Dendritic cell treated with granulocyte-macrophage colony-stimulating factor and Interleukin-4, amounts not matched to agents 40 ng/mL and 50 ng/mL, for 4 days (primary cell): ENCODE measurements at regions of chr11 and their contacts with region 1.

Region 1: DNA sequence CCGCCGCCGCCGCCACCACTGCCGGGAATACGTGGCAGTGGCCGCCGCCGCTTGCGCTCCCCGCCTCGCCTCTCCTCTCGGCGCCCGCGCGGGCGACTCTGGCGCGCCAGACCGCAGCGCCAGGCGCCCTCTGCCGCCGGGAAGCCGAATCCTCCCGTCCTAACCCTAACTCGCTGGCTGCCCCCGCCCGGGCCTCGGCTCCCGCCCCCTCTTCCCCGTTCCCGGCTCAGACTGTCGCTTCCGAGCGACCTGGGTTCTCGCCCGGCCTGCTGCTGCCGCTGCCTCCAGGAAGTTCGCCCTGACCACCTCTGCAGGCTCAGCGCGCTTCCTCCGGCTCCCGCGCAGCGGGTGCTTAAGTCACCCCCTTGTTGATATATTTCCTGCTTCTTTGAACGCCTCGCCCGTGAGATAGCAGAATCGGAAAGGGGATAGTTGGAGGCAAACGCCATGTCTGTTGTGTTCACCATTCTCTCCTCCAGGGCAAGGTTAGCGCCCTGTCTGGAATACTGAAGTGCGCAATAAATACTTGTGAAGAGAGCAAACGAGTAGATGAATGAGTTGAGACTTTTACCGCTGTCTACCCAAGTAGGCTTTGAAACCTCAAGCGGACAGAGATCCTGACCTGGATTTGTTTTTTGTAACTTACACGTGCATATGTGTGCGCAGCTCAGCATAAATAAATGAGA is at the start of gene SMCO4:
- H3K4me3 Mint-ChIP-seq: peak within 1 kb of the TSS; percentile 92
- H3K27ac Mint-ChIP-seq: peak within 1 kb of the TSS; percentile 90
- H3K4me1 Mint-ChIP-seq: peaks cover 46% of the 10 kb centered on the region
- H3K27me3 Mint-ChIP-seq: no peaks in the 10 kb centered on the region

Region 2: DNA sequence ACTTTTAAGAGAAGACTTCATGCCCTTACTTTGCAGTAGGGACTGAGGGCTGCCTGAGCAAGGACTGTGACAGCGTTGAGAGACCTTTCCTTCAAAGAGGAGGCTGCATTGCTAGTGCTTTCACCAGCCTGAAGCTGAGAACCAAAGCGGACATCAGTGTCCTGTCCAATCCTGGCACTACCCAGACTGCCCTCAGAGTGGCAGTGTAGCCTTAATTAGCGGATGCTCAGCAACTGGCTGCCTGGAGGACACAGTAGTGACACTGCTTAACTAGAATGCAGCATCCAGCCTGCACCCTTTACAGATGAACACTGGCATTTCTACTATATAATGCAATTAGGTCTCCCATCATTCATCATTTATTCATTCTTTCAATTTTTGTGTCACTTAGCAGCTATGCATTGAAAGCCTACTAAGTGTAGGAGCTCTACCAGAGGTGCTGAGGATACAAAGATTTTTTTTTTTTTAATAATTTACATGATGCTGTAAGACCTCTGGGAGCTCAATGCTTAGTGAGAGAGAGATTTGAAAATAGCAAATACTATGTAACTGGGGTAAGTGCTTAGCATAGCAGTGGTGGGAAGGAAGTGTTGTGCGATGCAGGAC is 308.7 kb before region 1 on chr11:
- intact Hi-C with region 1: loop called (anchors 2 kb)
- H3K4me3 Mint-ChIP-seq: no peak overlapping the region
- H3K27ac Mint-ChIP-seq: no peak overlapping the region
- H3K4me1 Mint-ChIP-seq: no peaks in the 10 kb centered on the region
- H3K27me3 Mint-ChIP-seq: peaks cover 9% of the 10 kb centered on the region

Region 3: DNA sequence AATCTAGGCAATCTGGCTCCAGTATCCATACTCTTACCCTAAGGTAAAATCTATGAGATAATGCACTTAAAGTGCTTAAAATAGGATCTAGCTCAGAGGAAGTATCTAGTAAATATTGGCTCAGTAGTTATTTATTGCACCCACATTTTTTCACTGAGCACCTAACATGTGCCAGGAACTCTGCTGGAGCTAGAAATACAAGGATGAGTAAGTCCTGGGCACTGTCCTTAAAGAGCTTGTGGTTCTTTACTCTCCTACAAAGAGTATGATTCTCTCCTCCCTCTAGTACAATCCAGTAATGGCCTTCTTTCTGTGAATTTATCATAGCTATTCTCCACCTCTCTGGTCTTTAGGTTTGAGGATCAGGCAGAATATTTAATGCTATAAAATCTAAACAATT is 153.7 kb before region 1 on chr11:
- intact Hi-C with region 1: loop called (anchors 10 kb)
- H3K4me3 Mint-ChIP-seq: no peak overlapping the region
- H3K27ac Mint-ChIP-seq: no peak overlapping the region
- H3K4me1 Mint-ChIP-seq: no peaks in the 10 kb centered on the region
- H3K27me3 Mint-ChIP-seq: no peaks in the 10 kb centered on the region

Region 4: DNA sequence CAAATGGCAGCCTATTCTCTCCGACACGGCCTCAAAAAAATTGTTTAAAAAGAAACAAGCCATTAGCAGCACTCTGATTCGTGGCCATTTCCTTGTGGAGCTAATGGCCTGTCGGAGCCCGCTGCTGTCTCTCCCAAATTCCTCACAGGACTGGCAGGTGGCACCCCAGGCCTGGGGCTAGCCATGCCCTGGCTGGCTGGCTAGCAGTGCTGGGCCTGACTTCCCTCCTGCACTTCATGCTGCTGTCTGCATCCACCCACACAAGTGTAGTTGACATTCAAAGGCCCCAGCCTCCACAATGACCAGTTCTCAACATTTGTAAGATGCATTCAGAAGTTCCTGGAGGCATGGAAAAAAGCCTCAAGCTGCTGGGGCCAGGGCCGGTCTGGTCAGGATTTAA is 61.7 kb before region 1 on chr11:
- intact Hi-C with region 1: loop called (anchors 5 kb)
- H3K4me3 Mint-ChIP-seq: no peak overlapping the region
- H3K27ac Mint-ChIP-seq: peak overlapping the region; percentile 10
- H3K4me1 Mint-ChIP-seq: peaks cover 15% of the 10 kb centered on the region
- H3K27me3 Mint-ChIP-seq: no peaks in the 10 kb centered on the region

Region 5: DNA sequence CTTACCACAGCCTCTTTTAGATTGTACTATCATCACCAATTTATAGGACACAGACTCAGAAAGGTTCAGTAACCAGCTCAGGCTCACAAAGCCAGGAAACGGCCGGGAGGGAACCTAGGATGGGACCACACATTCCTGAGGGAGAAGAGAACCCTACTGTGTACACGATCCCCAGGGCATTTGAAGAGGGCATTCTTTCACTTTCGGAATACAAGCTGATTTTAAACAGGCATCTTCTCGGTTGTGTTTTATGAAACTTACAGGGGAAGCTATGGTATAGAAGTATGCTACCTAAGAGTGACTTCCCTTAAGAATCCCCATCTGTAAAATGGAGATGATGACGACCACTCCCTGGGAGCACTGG is 19.3 kb before region 1 on chr11:
- intact Hi-C with region 1: loop called (anchors 1 kb)
- H3K4me3 Mint-ChIP-seq: peak overlapping the region; percentile 65
- H3K27ac Mint-ChIP-seq: peak overlapping the region; percentile 91
- H3K4me1 Mint-ChIP-seq: peaks cover 72% of the 10 kb centered on the region
- H3K27me3 Mint-ChIP-seq: no peaks in the 10 kb centered on the region

Region 6: DNA sequence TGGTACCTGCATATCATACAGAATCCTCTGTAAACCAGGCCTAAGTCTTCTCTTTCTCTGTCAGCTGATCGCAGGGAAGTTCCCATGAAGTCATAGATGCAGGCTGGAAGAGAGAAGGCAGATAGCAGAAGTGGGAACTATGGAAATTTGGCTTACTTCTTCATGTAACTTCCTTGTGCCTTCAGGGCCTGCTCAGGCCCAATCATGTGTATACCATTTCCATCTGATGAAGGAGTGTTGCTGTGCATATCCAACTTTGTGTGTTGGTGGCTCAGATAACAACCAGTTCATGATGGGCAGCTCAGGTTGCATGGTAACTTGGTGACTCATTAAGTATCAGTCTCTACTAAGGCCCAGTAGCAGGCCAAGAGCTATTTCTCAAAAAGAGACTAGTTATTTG is 64.9 kb after region 1 on chr11:
- intact Hi-C with region 1: loop called (anchors 5 kb)
- H3K4me3 Mint-ChIP-seq: no peak overlapping the region
- H3K27ac Mint-ChIP-seq: peak overlapping the region; percentile 85
- H3K4me1 Mint-ChIP-seq: peaks cover 20% of the 10 kb centered on the region
- H3K27me3 Mint-ChIP-seq: no peaks in the 10 kb centered on the region

Region 7: GRCh38 chr11:93652161-93652597 is 108.7 kb after region 1 on chr11:
- intact Hi-C with region 1: loop called (anchors 5 kb)
- H3K4me3 Mint-ChIP-seq: no peak overlapping the region
- H3K27ac Mint-ChIP-seq: no peak overlapping the region
- H3K4me1 Mint-ChIP-seq: peaks cover 36% of the 10 kb centered on the region
- H3K27me3 Mint-ChIP-seq: peaks cover 4% of the 10 kb centered on the region

Region 8: DNA sequence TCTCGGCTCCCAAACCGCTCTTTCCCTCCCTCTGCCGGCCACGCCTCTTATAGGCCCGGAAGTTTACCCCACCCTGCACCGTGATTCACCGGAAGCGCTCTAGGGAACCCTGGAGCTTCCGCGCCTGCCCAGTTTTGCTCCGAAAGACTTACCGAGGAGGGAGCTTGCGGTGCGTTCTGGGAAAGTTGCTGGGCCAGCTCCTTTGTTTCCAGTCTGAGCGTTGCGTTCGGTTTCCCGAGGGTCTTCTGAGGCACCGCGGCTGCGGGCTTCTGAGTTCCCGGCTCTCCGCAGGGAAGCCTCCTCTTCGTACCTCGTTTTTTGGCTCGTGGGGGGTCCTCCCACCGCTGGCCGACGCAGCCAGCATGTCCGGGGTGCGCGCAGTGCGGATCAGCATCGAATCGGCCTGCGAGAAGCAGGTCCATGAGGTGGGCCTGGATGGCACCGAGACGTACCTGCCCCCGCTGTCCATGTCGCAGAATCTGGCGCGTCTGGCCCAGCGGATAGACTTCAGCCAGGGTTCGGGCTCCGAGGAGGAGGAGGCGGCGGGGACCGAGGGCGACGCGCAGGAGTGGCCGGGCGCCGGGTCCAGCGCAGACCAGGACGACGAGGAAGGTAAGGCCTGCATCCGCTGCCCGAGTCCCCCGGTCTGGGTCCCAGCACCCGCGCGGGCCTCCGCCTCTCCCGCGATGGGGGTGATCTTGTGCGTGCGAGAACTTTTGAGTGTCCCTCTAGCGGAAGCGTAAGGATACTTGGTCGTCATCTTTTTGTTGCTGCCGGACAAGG is 240.9 kb after region 1 on chr11 and contains the start of gene MED17:
- intact Hi-C with region 1: no loop called
- H3K4me3 Mint-ChIP-seq: peak within 1 kb of the TSS; percentile 88
- H3K27ac Mint-ChIP-seq: peak within 1 kb of the TSS; percentile 90
- H3K4me1 Mint-ChIP-seq: peaks cover 31% of the 10 kb centered on the region
- H3K27me3 Mint-ChIP-seq: no peaks in the 10 kb centered on the region

Region 9: DNA sequence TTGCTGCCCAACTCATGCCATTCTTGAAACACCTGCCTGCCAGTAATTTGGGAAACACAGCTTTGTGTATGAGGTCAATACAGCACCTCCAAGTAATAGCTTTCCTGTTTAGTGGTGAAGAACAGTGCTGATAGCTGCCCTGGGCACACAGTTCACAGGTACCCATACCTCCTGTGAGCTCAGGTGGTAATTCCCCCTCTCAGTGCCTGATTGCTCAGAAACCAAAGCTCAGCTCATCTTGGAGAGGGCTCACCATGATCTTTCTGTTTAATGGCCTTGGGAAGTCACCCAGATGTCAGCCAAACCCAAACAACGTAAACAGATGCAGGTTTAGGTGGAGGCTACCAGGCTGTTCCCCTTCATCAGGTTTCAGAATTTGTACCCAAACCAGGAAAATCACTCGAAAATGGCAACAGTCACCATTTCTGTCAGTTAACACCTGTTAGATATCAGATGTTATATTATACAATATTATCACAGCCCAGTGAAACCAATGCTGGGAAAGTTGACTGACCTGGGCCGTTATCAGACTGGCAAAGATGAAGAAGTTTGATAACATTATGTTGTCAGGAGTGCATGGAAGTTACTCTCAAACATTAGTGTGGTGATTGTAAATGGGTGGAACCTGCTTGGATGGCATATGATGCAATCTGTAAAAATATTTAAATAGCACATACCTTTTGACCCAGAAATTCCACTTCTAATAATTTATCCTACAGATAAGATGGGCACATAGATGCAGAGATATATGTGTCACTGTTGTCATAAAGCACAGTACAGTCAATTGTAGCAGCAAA is 288.1 kb after region 1 on chr11:
- intact Hi-C with region 1: no loop called
- H3K4me3 Mint-ChIP-seq: no peak overlapping the region
- H3K27ac Mint-ChIP-seq: no peak overlapping the region
- H3K4me1 Mint-ChIP-seq: no peaks in the 10 kb centered on the region
- H3K27me3 Mint-ChIP-seq: no peaks in the 10 kb centered on the region